Activated CD8-positive, alpha-beta memory T cell treated with anti-CD3 and anti-CD28 coated beads, Interleukin-2, amount 10 ng/mL, durations not matched to agents 7 days and 5 days (primary cell): ENCODE measurements at regions of chr1 and their contacts with region 1.

Region 1: DNA sequence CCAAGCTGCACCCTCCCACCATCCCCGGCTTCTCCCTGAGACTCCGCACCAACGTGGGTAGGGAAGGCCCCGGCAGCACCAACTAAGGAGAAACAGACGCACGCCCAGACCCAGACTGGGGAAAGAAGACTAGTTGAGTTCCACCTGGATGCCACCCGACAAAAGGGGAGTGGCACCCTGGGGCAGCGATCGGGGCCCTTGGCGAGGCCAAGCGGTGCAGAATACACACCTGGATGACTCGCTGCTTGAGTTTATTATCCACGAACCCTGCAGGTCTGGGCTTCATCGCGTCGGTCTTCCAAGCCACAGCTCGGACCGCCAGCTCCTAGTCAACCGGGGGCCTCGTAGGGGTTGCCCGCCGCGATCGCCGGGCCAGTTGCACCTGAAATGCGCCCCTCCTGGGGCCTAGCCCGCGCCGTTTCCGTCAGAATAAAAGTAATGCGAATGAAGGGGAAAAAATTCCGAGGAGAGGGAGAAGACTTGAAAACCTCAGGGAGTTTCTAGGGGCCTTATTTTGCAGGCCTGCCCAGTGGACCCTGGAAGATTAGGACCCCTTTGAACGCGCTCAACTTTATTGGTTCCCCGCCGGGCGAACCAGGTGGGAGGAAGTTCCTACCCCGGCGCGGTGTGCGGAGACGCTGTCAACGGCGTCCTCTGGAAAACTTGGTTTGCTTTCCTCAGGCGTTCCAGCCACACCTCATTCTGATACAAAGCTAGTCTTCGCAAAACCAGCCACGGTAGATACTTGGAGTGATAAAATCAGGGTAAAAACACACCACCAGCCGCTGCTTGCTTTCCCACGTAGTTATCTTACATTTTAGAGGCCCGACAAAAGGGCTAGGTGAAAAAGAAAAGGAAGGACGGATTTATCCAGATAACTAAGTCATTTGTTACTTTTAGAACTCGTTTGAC is at the start of gene NVL:
- DNase-seq: peak; percentile 88
- ATAC-seq: peak; percentile 83
- H3K4me3 Mint-ChIP-seq: peak within 1 kb of the TSS; percentile 98
- H3K27ac Mint-ChIP-seq: peak within 1 kb of the TSS; percentile 99
- H3K4me1 Mint-ChIP-seq: peaks cover 61% of the 10 kb centered on the region
- H3K27me3 Mint-ChIP-seq: no peaks in the 10 kb centered on the region
- total RNA-seq, gene NVL: 47.7 to 53.6 TPM

Region 2: GRCh38 chr1:224116131-224116530 is 214.0 kb before region 1 on chr1:
- CTCF ChIA-PET with region 1: interaction called, 29 read pairs
- DNase-seq: no peak
- ATAC-seq: peak; percentile 24
- H3K4me3 Mint-ChIP-seq: peak overlapping the region; percentile 51
- H3K27ac Mint-ChIP-seq: peak overlapping the region; percentile 60
- H3K4me1 Mint-ChIP-seq: peaks cover 31% of the 10 kb centered on the region
- H3K27me3 Mint-ChIP-seq: peaks cover 5% of the 10 kb centered on the region